ENCODE measurements at regions of chr2 and their contacts with region 1.

Region 1: DNA sequence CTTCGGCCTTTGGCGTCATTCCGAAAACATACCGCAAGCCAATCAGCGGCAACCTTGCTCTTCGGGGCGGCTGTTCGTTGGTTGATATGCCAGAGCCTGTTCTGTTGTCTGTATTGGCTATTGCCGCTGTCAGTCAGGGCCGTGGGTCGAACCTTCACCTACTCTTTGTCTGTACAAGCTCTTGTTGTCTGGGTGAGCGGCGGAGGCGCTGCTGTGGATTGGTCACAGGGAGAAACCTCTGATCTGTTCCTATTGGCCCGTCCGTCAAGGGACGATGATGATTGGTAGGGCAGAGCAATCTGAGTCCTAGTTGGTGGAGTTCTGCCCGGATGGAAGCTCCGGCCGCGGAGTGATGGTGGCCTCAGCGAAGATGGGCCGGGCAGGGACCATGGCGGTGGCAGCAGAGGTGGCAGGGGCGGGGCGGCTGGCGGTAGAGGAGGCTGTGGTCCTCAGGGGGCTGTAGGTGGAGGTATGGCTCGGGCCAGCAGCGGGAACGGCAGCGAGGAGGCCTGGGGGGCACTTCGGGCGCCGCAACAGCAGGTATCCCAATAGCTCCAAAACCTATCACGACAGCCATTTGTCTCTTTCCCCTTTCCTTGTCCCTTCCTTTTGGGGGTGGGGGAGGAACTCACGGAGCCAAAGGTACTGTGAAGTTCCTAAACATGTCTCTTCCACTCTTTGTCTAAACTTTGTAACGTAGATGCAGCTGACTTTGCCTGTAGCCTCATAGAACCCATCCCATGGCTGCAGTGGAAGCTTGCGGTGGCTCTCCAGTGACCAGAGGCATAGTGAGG is at the start of gene WBP1:
- DNase-seq: peak; percentile 96 to 100 (median 98)
- ATAC-seq: peak; percentile 77
- H3K4me3 ChIP-seq: peak within 1 kb of the TSS; percentile 84 to 95
- H3K4me3 Mint-ChIP-seq: peak within 1 kb of the TSS; percentile 97
- H3K27ac ChIP-seq: peak within 1 kb of the TSS; percentile 93 to 100
- H3K27ac Mint-ChIP-seq: peak within 1 kb of the TSS; percentile 99
- H3K4me1 ChIP-seq: peaks cover 34% of the 10 kb centered on the region
- H3K4me1 Mint-ChIP-seq: peaks cover 57% of the 10 kb centered on the region
- H3K27me3 ChIP-seq: no peaks in the 10 kb centered on the region
- H3K27me3 Mint-ChIP-seq: no peaks in the 10 kb centered on the region
- CTCF ChIP-seq: no peak
- total RNA-seq, gene WBP1: 68.5 to 70.6 TPM

Region 2: DNA sequence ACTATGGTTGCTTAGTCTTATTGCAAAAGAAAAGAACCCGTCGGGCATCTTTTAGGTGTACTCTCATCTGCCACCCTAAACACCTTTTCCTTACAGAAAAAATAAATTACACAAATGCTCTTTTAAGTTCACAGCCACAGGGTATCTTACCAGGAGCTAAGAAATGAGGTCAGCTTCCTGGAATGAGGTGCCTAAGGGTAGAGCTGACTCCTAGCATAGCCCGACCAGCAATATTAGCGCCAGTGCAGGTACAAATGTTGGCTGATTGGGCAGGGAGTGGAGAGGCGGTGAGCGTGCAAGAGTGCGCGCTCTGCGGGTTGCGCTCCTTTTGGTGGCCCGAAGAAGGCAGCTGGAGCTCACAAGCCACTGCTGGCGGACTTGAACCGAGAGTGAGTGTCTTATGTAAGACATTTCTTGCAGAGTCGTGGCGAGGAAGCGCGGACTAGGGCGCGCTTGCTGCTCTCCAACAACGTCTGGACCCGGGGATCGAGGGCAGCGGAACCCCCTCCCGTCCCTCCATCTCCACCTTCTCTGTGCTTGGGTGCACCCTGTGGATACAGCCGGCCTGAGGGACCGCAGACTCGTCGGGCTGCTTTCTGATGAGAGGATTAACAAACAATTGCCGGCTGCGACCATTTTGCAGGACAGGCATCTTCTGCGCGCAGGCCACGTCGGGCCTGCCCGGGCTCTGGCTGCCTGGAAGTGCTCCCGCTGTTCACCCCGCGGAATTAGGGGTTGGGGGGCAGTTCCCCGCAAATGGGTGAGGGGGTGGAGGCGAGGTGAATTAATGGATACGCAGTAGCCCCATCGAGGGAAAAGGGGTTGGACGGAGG is 327.9 kb before region 1 on chr2:
- CTCF ChIA-PET with region 1: no interaction called
- POLR2A ChIA-PET with region 1: no interaction called
- intact Hi-C with region 1: no loop called
- DNase-seq: no peak
- ATAC-seq: no peak
- H3K4me3 ChIP-seq: no peak overlapping the region
- H3K4me3 Mint-ChIP-seq: no peak overlapping the region
- H3K27ac ChIP-seq: no peak overlapping the region
- H3K27ac Mint-ChIP-seq: no peak overlapping the region
- H3K4me1 ChIP-seq: no peaks in the 10 kb centered on the region
- H3K4me1 Mint-ChIP-seq: no peaks in the 10 kb centered on the region
- H3K27me3 ChIP-seq: peaks cover 2 to 4% of the 10 kb centered on the region in 2 experiments
- H3K27me3 Mint-ChIP-seq: peaks cover 17% of the 10 kb centered on the region
- CTCF ChIP-seq: no peak

Region 3: DNA sequence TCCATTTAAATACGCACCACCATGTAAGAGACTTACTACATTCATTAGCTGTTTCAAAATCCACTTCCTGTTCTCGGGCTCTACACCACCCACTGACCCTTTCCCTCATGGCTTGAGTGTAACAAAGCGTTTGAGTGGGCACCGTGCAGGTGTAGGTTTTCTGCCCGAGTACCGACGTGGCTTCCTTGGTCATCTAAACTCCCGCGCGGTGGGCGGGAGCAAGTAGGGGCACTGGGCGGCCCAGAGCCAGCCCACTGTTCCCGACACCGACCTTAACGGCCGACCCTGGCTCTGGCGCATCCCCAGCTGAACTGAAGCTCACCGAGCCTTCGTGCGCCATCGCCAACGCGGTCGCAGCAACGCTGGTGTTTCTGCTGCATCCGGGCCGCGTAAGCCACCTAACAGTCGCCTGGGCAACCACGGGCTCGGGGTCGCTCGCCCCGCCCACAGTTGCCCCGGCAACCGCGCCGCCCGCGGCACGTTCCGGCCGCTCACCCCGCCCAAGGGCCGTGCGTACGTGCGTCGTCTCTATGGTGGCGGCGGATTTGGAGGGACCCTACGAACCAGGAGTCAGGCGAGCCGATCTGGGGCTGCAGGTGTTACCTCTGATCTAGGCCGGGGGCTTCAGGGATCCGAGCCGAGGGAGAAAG is 37.0 kb before region 1 on chr2 and contains the starts of genes C2orf81 and WDR54:
- CTCF ChIA-PET with region 1: interaction called, 4 read pairs
- POLR2A ChIA-PET with region 1: interaction called, 14 read pairs
- intact Hi-C with region 1: loop called (anchors 1 kb)
- DNase-seq: peak; percentile 90 to 98 (median 95)
- ATAC-seq: peak; percentile 88
- H3K4me3 ChIP-seq: peak within 1 kb of the TSS; percentile 72 to 92
- H3K4me3 Mint-ChIP-seq: peak within 1 kb of the TSS; percentile 98
- H3K27ac ChIP-seq: peak within 1 kb of the TSS; percentile 96 to 97
- H3K27ac Mint-ChIP-seq: peak within 1 kb of the TSS; percentile 96
- H3K4me1 ChIP-seq: peaks cover 20% of the 10 kb centered on the region
- H3K4me1 Mint-ChIP-seq: peaks cover 17% of the 10 kb centered on the region
- H3K27me3 ChIP-seq: no peaks in the 10 kb centered on the region
- H3K27me3 Mint-ChIP-seq: no peaks in the 10 kb centered on the region
- CTCF ChIP-seq: no peak
- total RNA-seq, gene C2orf81: 0.75 to 1.8 TPM
- total RNA-seq, gene WDR54: 18.4 to 19.8 TPM